ENCODE measurements at regions of chr4 and their contacts with region 1.

Region 1: DNA sequence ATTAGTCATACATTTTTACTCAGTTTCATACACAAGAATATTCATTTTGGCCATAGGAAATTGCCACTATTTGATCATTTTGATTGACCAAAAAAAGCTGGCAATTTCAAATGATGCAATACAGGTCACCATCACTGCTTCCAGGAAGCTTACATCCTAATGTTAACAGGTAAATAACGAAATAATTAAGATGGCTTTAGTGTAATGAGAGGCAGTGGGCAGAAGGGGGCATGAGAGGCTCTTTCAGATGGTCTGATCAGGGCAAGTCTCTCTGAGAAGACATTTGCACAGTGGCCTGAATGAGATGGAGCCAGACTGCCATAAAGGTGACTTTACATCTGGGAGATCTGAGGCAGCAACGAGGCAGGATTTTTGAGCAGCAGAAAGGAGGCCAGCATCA is 170.7 kb downstream of the SLIT2 start:
- DNase-seq: no peak
- H3K4me3 ChIP-seq: no peak overlapping the region
- H3K27ac ChIP-seq: no peak overlapping the region
- H3K4me1 ChIP-seq: no peaks in the 10 kb centered on the region
- H3K27me3 ChIP-seq: no peaks in the 10 kb centered on the region
- CTCF ChIP-seq: peak; percentile 57

Region 2: GRCh38 chr4:20028694-20029093 is 393.7 kb before region 1 on chr4:
- intact Hi-C with region 1: no loop called
- DNase-seq: no peak
- H3K4me3 ChIP-seq: no peak overlapping the region
- H3K27ac ChIP-seq: no peak overlapping the region
- H3K4me1 ChIP-seq: no peaks in the 10 kb centered on the region
- H3K27me3 ChIP-seq: no peaks in the 10 kb centered on the region
- CTCF ChIP-seq: no peak

Region 3: GRCh38 chr4:20219521-20219920 is 202.9 kb before region 1 on chr4:
- intact Hi-C with region 1: no loop called
- DNase-seq: no peak
- H3K4me3 ChIP-seq: no peak overlapping the region
- H3K27ac ChIP-seq: no peak overlapping the region
- H3K4me1 ChIP-seq: no peaks in the 10 kb centered on the region
- H3K27me3 ChIP-seq: no peaks in the 10 kb centered on the region
- CTCF ChIP-seq: no peak

Region 4: DNA sequence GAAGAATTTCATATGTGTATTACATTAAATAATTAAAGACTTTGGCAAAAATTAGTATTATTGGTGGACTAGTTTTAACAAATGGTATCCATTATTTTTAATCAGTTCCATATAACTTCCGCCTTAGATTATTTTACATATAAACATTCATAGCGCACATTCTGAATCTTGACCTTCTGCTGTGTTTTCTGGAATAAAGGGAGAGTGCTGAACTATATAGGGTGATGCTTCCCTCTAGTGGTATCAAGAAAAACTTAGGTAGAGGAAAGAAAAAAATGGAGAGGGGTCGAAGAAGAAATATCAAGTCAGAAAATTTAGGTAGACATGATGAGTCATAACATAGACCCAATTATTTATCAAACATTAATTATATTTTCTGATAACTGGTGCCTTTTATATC is 122.2 kb after region 1 on chr4:
- intact Hi-C with region 1: loop called (anchors 10 kb)
- DNase-seq: no peak
- H3K4me3 ChIP-seq: no peak overlapping the region
- H3K27ac ChIP-seq: no peak overlapping the region
- H3K4me1 ChIP-seq: no peaks in the 10 kb centered on the region
- H3K27me3 ChIP-seq: no peaks in the 10 kb centered on the region
- CTCF ChIP-seq: peak; percentile 54